Activated T-helper 2 cell treated with anti-CD3 and anti-CD28 coated beads, Interferon-gamma antibody, Interleukin-2, Interleukin-4, amounts not matched to agents 10 μg/mL and 5 μg/mL and 100 μg/mL, durations not matched to agents 14 hours and 24 hours and 36 hours (primary cell): ENCODE measurements at regions of chr6 and their contacts with region 1.

Region 1: DNA sequence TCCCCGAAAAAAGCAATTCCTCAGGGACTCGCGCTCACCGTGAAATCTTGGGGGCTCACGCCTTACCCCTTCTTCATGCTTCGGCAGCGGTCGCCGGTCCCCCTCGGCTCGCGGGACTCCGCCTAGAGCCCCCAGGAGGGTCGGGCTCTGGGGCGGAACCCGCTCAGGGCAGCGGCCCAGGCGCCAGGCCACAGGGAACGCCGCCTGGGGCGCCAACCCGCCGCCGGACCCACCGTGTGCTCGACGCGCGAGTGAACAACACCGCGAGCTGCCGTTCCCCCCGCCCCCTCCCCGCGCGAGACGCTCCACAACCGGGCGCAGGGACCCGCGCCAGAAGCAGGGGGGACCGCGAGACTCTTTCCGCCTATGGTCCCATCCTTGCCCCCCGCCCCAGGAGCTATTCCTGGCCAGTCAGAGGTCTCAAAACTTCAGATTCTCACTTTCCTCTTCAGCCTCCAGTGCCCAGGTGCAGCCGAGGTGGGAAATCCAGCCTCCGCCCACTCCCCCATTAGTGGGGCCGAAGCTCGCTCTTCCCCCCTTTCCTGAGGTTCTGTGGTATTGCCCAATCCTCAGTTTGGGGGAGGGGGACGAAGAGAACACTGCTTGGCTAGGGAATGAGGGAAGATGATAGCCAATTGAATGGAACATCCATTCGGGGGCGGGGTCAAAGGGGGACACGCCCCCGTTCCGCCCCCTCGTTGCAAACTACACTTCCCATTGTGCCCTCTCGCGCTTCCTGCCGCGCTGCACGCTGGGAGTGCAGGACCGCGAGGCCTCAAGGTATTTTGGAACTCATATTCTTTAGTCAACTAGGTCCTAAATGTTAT is at the start of gene WASF1:
- DNase-seq: peak; percentile 85
- H3K4me3 Mint-ChIP-seq: peak within 1 kb of the TSS; percentile 78
- H3K27ac Mint-ChIP-seq: peak within 1 kb of the TSS; percentile 3
- H3K4me1 Mint-ChIP-seq: peaks cover 8% of the 10 kb centered on the region
- H3K27me3 Mint-ChIP-seq: peaks cover 19% of the 10 kb centered on the region
- total RNA-seq, gene WASF1: 2.3 TPM in 2 replicates

Region 2: GRCh38 chr6:109690737-109691621 is 488.6 kb before region 1 on chr6 and contains the starts of genes AK9 and FIG4:
- intact Hi-C with region 1: loop called (anchors 2 kb)
- DNase-seq: peak; percentile 84
- H3K4me3 Mint-ChIP-seq: peak within 1 kb of the TSS; percentile 96
- H3K27ac Mint-ChIP-seq: peak within 1 kb of the TSS; percentile 86
- H3K4me1 Mint-ChIP-seq: peaks cover 26% of the 10 kb centered on the region
- H3K27me3 Mint-ChIP-seq: peaks cover 10% of the 10 kb centered on the region
- total RNA-seq, gene AK9: 3.1 and 3.8 TPM in 2 replicates
- total RNA-seq, gene FIG4: 8.8 and 9.5 TPM in 2 replicates

Region 3: DNA sequence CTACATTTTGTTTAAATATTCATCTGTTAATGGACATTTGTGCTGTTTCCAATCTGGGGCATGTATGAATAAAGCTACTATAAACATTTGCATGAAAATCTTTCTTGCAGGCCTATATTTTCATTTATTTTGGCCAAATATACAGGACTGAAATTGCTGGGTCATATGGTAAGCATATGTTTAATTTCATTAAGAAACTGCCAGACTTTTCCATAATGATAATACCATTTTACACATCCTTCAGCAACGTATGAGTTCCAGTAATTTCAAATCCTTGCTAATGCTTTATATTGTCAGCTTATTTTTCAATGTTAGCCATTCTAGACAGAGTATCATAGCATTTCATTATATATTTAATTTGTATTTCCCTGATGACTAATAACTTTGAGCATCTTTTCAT is 150.5 kb before region 1 on chr6:
- intact Hi-C with region 1: no loop called
- DNase-seq: no peak
- H3K4me3 Mint-ChIP-seq: no peak overlapping the region
- H3K27ac Mint-ChIP-seq: no peak overlapping the region
- H3K4me1 Mint-ChIP-seq: no peaks in the 10 kb centered on the region
- H3K27me3 Mint-ChIP-seq: no peaks in the 10 kb centered on the region

Region 4: DNA sequence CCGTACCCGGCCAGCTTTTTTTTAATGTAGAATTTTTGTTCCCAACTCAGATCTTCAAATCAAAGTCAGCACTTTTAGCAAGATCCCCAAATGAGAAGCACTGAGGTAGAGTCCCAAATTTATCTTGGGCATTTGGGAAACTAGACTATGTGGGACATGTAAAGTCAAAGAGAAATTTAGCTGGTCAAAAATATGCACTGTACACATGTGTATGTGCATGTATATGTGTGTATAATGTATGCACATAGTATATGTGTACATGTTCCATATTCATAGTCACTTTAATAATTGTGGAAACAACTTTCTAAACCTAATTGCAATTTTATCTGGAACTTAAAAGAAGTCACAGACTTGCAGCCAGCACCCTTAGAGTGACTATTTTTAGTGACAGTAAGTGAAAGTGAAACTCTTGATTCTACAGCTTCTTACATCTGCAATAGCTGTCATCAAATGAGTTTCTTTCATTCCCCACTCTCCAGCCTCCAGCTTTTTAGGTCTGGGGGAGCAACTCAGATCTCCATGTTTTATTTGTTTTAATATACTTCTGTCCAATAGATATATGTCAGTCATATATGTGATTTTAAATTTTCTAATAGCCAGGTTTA is 54.3 kb after region 1 on chr6:
- intact Hi-C with region 1: loop called (anchors 2 kb)
- DNase-seq: no peak
- H3K4me3 Mint-ChIP-seq: no peak overlapping the region
- H3K27ac Mint-ChIP-seq: no peak overlapping the region
- H3K4me1 Mint-ChIP-seq: peaks cover 6% of the 10 kb centered on the region
- H3K27me3 Mint-ChIP-seq: no peaks in the 10 kb centered on the region

Region 5: DNA sequence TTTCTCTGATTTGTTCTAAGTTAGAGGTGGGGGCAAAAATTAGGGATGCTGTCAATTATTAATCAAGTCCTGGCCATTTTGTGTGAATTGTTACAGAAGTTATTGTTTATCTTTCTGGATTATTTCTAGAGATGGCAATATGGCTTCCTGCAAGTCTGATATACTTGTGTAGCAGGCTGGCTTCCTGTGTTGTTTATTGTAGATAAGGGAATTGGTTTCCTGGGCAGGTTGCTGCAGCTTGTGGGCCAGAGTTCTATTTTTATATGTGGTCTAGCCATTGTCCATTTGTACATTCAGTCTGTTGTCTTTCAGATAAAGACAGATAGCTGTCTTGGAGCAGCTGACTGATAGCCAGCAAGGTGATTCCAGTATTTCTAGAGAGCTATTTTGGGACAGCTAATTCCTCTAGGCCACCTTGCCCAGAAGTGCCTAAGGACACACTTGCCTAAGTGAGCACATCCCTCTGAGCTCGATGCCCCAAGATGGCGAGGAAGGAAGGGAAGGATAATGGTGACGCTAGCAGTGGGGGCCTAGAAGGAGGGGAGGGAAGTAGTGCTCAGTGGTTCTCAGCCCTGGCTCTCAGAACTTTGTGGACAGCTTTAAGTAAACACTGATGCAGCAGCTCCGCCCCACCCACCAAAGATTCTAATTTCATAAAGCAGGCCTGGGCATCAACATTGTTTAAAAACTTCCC is 210.2 kb after region 1 on chr6:
- intact Hi-C with region 1: loop called (anchors 1 kb)
- DNase-seq: no peak
- H3K4me3 Mint-ChIP-seq: no peak overlapping the region
- H3K27ac Mint-ChIP-seq: no peak overlapping the region
- H3K4me1 Mint-ChIP-seq: peaks cover 17% of the 10 kb centered on the region
- H3K27me3 Mint-ChIP-seq: no peaks in the 10 kb centered on the region